ENCODE measurements at regions of chr4 and their contacts with region 1.

Region 1: GRCh38 chr4:75916091-75916661 is 13.9 kb upstream of the PPEF2 start:
- DNase-seq: no peak
- H3K4me3 ChIP-seq: no peak overlapping the region
- H3K27ac ChIP-seq: no peak overlapping the region
- H3K4me1 ChIP-seq: peaks cover 0 to 3% (median 0%) of the 10 kb centered on the region in 4 experiments; a peak in 2 of 7 replicates
- H3K27me3 ChIP-seq: no peaks in the 10 kb centered on the region
- CTCF ChIP-seq: peak in 2 of 3 experiments; percentile 52 to 76; a peak in 2 of 4 replicates
- EP300 ChIP-seq: no peak
- POLR2A ChIP-seq: no peak
- RAD21 ChIP-seq: peak; percentile 69 to 73

Region 2: GRCh38 chr4:75841641-75842520 is 74.3 kb before region 1 on chr4:
- CTCF ChIA-PET with region 1: no interaction called
- POLR2A ChIA-PET with region 1: no interaction called
- DNase-seq: no peak
- H3K4me3 ChIP-seq: no peak overlapping the region
- H3K27ac ChIP-seq: no peak overlapping the region
- H3K4me1 ChIP-seq: peaks cover 0 to 8% (median 4%) of the 10 kb centered on the region in 4 experiments; a peak in 3 of 7 replicates
- H3K27me3 ChIP-seq: peaks cover 0 to 2% (median 0%) of the 10 kb centered on the region in 4 experiments; a peak in 1 of 7 replicates
- CTCF ChIP-seq: no peak
- EP300 ChIP-seq: no peak
- POLR2A ChIP-seq: no peak
- RAD21 ChIP-seq: no peak

Region 3: GRCh38 chr4:75930152-75930551 is 14.0 kb after region 1 on chr4:
- CTCF ChIA-PET with region 1: interaction called, 73 read pairs
- POLR2A ChIA-PET with region 1: interaction called, 12 read pairs
- DNase-seq: peak in 1 of 2 experiments; percentile 20
- H3K4me3 ChIP-seq: no peak overlapping the region
- H3K27ac ChIP-seq: no peak overlapping the region
- H3K4me1 ChIP-seq: no peaks in the 10 kb centered on the region
- H3K27me3 ChIP-seq: no peaks in the 10 kb centered on the region
- CTCF ChIP-seq: no peak
- EP300 ChIP-seq: no peak
- POLR2A ChIP-seq: no peak
- RAD21 ChIP-seq: no peak

Region 4: DNA sequence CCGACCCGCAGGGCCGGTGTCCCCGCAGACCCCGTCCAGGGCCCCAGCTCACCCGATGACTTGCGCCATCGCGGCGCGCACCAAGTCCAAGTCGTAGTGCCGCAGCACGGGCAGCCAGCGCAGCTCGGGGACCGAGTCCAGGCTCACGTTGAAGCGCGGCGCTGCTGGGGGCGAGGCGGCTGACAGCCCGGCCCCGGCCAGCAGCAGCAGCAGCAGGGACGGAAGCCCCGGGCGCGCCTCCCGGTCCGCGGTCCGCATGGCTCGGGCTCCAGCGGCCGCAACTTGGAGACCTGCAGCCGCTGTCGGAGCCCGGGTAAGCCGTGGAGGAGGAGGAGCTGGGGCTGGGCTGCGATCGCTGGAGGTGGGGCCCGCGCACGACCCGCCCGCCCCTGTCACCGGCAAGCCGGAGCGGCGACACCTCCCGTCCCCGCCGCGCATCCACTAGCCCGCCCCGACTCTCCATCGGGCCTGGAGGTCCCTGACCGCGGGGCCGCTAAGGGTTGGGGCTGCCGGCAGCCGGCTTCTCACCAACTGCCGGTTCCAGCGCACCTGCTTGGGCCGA is 24.6 kb after region 1 on chr4 and contains the start of gene NAAA:
- CTCF ChIA-PET with region 1: interaction called, 73 read pairs
- POLR2A ChIA-PET with region 1: interaction called, 5 read pairs
- DNase-seq: peak; percentile 75 to 92
- H3K4me3 ChIP-seq: peak within 1 kb of the TSS; percentile 69 to 85 (median 74)
- H3K27ac ChIP-seq: no peak within 1 kb of the TSS
- H3K4me1 ChIP-seq: peaks cover 0 to 3% (median under 1%) of the 10 kb centered on the region in 4 experiments; a peak in 2 of 7 replicates
- H3K27me3 ChIP-seq: peaks cover 0 to 3% (median 0%) of the 10 kb centered on the region in 4 experiments; a peak in 1 of 7 replicates
- CTCF ChIP-seq: peak; percentile 42 to 66 (median 64)
- EP300 ChIP-seq: no peak
- POLR2A ChIP-seq: peak in 1 of 2 experiments; percentile 59; a peak in 1 of 3 replicates
- RAD21 ChIP-seq: peak; percentile 30 to 48; a peak in 3 of 4 replicates
- total RNA-seq, gene NAAA: 9.4 and 13.0 TPM in 2 replicates

Region 5: GRCh38 chr4:75948822-75949444 is 32.8 kb after region 1 on chr4:
- CTCF ChIA-PET with region 1: interaction called, 13 read pairs
- POLR2A ChIA-PET with region 1: interaction called, 3 read pairs
- DNase-seq: no peak
- H3K4me3 ChIP-seq: no peak overlapping the region
- H3K27ac ChIP-seq: no peak overlapping the region
- H3K4me1 ChIP-seq: no peaks in the 10 kb centered on the region
- H3K27me3 ChIP-seq: no peaks in the 10 kb centered on the region
- CTCF ChIP-seq: no peak
- EP300 ChIP-seq: no peak
- POLR2A ChIP-seq: no peak
- RAD21 ChIP-seq: no peak

Region 6: DNA sequence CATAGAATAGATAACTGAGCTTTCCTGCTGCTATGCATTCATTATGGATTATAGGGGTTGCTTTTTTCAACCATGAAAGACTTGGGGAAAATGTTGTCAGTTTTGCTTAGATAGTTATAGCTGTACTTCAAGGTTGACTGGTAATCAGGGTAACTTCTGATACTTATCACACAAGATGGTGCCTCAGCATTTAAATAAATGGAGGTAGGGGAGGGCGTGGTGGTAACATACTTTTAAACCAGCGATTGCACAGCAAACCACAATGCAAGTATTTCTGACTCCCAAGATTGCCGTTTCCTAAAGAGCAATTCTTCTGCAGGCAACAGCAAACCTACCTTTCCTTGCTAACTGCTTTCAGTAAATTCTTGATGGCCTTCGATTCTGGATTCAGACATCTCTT is 105.9 kb after region 1 on chr4:
- CTCF ChIA-PET with region 1: no interaction called
- POLR2A ChIA-PET with region 1: no interaction called
- DNase-seq: no peak
- H3K4me3 ChIP-seq: no peak overlapping the region
- H3K27ac ChIP-seq: no peak overlapping the region
- H3K4me1 ChIP-seq: no peaks in the 10 kb centered on the region
- H3K27me3 ChIP-seq: no peaks in the 10 kb centered on the region
- CTCF ChIP-seq: no peak
- EP300 ChIP-seq: no peak
- POLR2A ChIP-seq: no peak
- RAD21 ChIP-seq: no peak

Region 7: DNA sequence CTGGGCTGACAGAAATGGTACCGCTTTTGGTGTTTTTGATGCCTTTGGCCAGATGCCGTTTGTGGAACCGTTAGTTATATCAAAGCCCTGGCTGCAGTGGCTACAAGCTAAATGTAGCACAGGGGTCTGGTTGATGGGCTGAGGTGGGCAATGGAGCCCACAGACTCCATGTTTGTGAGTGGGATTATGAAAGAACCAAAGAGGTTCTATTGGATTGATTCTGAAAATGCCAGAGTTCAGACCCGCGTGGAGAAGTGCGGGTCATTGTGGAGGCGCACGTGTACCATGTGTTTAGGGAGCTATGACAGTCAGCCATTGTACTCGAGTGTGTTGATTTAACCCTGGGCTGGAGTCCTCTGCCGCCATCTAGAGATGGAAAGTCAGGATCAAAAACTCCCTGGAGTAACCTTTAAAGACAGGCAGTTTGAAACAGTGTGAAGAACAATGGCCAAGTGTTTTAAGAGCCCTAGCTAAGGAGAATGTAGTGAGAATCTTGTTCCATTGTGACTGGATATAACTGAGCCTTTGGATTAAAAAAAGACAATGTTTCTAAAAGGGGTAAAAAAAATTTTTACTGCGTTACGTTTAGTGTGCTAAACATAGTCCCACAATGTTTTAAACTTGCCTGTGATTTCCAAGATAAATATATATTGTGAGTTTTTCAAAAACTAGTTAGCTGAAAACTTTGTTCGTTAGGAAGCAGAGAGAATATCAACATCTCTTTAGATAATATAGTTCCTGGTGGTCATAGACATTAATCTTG is 171.0 kb after region 1 on chr4:
- CTCF ChIA-PET with region 1: interaction called, 12 read pairs
- POLR2A ChIA-PET with region 1: no interaction called
- DNase-seq: peak; percentile 59 to 64
- H3K4me3 ChIP-seq: peak overlapping the region in 1 of 4 experiments; percentile 34; a peak in 1 of 8 replicates
- H3K27ac ChIP-seq: no peak overlapping the region
- H3K4me1 ChIP-seq: no peaks in the 10 kb centered on the region
- H3K27me3 ChIP-seq: no peaks in the 10 kb centered on the region
- CTCF ChIP-seq: peak; percentile 22 to 80 (median 67)
- EP300 ChIP-seq: no peak
- POLR2A ChIP-seq: no peak
- RAD21 ChIP-seq: peak; percentile 88 to 90

Measured in H1 (cell line).